Colonic mucosa (tissue), 4 donors: ENCODE measurements at regions of chr16 and their contacts with region 1.

Region 1: GRCh38 chr16:78122774-78123315 is 23.4 kb downstream of the WWOX start:
- DNase-seq: no peak
- H3K4me3 ChIP-seq: no peak overlapping the region
- H3K27ac ChIP-seq: no peak overlapping the region
- H3K4me1 ChIP-seq: no peaks in the 10 kb centered on the region
- H3K27me3 ChIP-seq: no peaks in the 10 kb centered on the region
- CTCF ChIP-seq: peak; percentile 22

Region 2: DNA sequence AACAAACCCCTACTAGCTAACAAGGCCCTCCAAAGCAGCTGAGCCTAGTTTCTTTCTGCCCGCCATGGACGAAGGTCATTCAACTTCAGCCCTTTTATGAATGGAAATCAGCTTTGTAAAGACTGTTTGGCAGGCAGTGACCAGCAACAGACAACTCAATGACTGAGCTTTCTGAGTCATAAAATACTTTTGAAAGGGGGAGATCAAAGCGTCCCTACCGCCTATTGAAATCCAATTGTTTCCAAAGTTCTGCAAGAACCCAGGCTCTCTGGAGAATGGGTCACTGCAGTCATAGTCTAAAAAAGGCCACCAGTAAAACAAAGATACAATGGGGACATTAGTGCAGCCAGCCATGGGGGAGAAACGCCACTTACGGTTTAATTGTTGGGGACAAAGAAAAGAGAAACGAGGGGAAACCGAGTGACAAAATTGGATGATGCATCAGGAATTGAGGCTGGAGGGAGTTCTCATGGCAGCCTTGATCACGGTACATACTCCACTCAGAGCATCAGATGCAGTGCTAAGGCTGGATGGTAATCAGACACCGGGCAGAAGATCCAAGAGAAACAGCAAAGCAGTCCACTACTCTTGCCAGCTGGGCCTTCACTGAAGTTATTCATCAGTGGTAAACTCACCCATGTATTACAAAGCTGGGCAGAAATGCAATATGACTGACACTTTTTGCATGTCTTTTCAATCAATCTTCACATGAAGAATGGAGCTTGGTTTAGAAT is 697.8 kb before region 1 on chr16:
- intact Hi-C with region 1: no loop called
- DNase-seq: no peak
- H3K4me3 ChIP-seq: no peak overlapping the region
- H3K27ac ChIP-seq: no peak overlapping the region
- H3K4me1 ChIP-seq: no peaks in the 10 kb centered on the region
- H3K27me3 ChIP-seq: no peaks in the 10 kb centered on the region
- CTCF ChIP-seq: no peak

Region 3: GRCh38 chr16:77736879-77737278 is 386.0 kb before region 1 on chr16:
- intact Hi-C with region 1: no loop called
- DNase-seq: no peak
- H3K4me3 ChIP-seq: no peak overlapping the region
- H3K27ac ChIP-seq: no peak overlapping the region
- H3K4me1 ChIP-seq: no peaks in the 10 kb centered on the region
- H3K27me3 ChIP-seq: no peaks in the 10 kb centered on the region
- CTCF ChIP-seq: no peak

Region 4: DNA sequence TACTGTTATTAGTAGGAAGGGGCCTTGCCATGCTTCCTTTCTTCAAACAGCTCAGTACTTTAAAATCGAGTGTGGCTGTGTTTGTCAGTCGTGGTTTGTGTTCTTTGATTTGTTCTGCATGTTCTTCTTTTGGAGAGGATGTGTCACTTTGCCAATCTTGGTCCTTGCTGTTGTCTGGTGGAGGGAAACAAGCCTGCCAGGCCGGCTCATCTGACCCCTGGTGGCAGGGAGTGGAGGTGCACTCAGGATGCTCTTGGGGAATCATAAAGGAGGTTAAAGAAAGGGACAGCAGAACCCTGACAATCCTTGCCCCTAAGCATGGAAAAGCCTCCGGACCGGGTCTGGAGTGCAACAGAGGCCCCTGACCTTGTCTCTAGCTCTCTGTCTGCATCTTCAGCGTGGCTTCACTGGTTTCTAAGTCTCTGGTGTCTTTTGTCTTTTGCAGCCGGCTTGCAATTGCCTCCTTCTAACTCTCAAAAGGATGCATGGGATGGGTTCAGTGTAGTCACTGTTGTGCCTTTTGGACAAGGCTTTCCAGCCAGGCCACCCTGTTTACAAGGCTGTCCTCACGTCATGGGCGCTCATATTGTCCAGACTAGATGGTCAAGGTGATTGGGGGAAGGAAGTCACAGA is 112.4 kb after region 1 on chr16:
- intact Hi-C with region 1: loop called (anchors 2 kb)
- DNase-seq: peak; percentile 75
- H3K4me3 ChIP-seq: no peak overlapping the region
- H3K27ac ChIP-seq: no peak overlapping the region
- H3K4me1 ChIP-seq: no peaks in the 10 kb centered on the region
- H3K27me3 ChIP-seq: no peaks in the 10 kb centered on the region
- CTCF ChIP-seq: peak; percentile 89

Region 5: GRCh38 chr16:78437352-78437968 is 314.6 kb after region 1 on chr16:
- intact Hi-C with region 1: loop called (anchors 10 kb)
- DNase-seq: peak; percentile 44
- H3K4me3 ChIP-seq: no peak overlapping the region
- H3K27ac ChIP-seq: no peak overlapping the region
- H3K4me1 ChIP-seq: no peaks in the 10 kb centered on the region
- H3K27me3 ChIP-seq: no peaks in the 10 kb centered on the region
- CTCF ChIP-seq: peak; percentile 94